Panc1 (cell line): ENCODE measurements at regions of chr6 and their contacts with region 1.

Region 1: GRCh38 chr6:28895134-28895812 is 28.5 kb downstream of the TRIM27 start:
- DNase-seq: peak; percentile 95
- ATAC-seq: peak; percentile 85
- H3K4me3 ChIP-seq: peak overlapping the region; percentile 89 to 92
- H3K27ac ChIP-seq: peak overlapping the region; percentile 95
- H3K4me1 ChIP-seq: peaks cover 5% of the 10 kb centered on the region
- H3K27me3 ChIP-seq: no peaks in the 10 kb centered on the region
- CTCF ChIP-seq: no peak

Region 2: GRCh38 chr6:28940858-28941680 is 45.8 kb after region 1 on chr6:
- CTCF ChIA-PET with region 1: no interaction called
- POLR2A ChIA-PET with region 1: no interaction called
- in situ Hi-C with region 1: no loop called
- intact Hi-C with region 1: loop called (anchors 5 kb)
- DNase-seq: peak; percentile 95
- ATAC-seq: peak; percentile 86
- H3K4me3 ChIP-seq: peak overlapping the region; percentile 99 to 100
- H3K27ac ChIP-seq: peak overlapping the region; percentile 84
- H3K4me1 ChIP-seq: peaks cover 17% of the 10 kb centered on the region
- H3K27me3 ChIP-seq: no peaks in the 10 kb centered on the region
- CTCF ChIP-seq: no peak

Region 3: GRCh38 chr6:29112119-29112518 is 216.8 kb after region 1 on chr6:
- CTCF ChIA-PET with region 1: no interaction called
- POLR2A ChIA-PET with region 1: no interaction called
- in situ Hi-C with region 1: no loop called
- intact Hi-C with region 1: no loop called
- DNase-seq: no peak
- ATAC-seq: 0 out of 2 replicates have a peak, but pooled peaks have one; percentile 56
- H3K4me3 ChIP-seq: no peak overlapping the region
- H3K27ac ChIP-seq: no peak overlapping the region
- H3K4me1 ChIP-seq: no peaks in the 10 kb centered on the region
- H3K27me3 ChIP-seq: peaks cover 2% of the 10 kb centered on the region; the same call in 1 of the 2 replicates
- CTCF ChIP-seq: peak; percentile 34